Prostate gland (tissue), 2 donors: ENCODE measurements at regions of chr3 and their contacts with region 1.

Region 1: GRCh38 chr3:197002701-197003454 is 26.7 kb downstream of the MELTF start:
- DNase-seq: peak; percentile 84
- H3K4me3 ChIP-seq: peak overlapping the region; percentile 57 to 58
- H3K27ac ChIP-seq: peak overlapping the region; percentile 85 to 93
- H3K4me1 ChIP-seq: peaks cover 4% of the 10 kb centered on the region
- H3K27me3 ChIP-seq: no peaks in the 10 kb centered on the region
- CTCF ChIP-seq: peak; percentile 65 to 88 (median 74)
- POLR2A ChIP-seq: no peak

Region 2: DNA sequence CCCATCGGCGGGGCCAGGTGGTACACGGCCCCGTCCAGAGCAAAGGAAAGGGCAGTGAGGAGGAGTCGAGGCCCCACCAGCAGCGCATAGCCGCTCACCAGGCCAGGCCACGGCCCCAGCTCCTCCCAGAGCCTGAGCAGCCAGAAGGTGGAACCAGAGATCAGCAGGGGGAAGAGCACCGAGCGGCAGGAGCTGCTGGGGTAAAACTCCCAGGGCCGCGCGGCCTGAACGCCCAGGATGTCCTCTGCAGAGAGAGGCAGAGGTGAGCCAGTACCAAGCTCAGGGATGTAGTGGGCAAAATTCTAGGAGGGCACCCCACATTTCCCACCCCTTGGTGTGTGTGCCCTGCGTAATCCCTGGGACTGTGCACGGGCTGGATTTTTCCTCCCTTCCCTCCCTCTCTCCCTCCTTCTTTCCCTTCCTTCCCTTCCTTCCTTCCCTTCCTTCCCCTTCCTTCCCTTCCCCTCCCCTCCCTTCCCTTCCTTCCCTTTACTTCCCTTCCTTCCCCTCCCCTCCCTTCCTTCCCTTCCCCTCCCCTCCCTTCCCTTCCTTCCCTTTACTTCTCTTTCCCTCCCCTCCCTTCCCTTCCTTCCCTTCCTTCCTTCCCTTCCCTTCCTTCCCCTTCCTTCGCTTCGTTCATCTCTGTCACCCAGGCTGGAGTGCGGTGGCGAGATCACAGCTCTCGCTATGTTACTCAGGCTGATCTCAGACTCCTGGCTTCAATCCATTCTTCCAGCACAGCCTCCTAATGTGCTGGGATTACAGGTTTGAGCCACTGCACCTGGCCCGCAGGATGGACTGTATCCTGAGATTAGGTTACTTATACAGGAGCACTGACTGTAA is 54.2 kb before region 1 on chr3:
- intact Hi-C with region 1: no loop called
- DNase-seq: no peak
- H3K4me3 ChIP-seq: no peak overlapping the region
- H3K27ac ChIP-seq: no peak overlapping the region
- H3K4me1 ChIP-seq: peaks cover under 1% of the 10 kb centered on the region
- H3K27me3 ChIP-seq: no peaks in the 10 kb centered on the region
- CTCF ChIP-seq: no peak
- POLR2A ChIP-seq: no peak

Region 3: DNA sequence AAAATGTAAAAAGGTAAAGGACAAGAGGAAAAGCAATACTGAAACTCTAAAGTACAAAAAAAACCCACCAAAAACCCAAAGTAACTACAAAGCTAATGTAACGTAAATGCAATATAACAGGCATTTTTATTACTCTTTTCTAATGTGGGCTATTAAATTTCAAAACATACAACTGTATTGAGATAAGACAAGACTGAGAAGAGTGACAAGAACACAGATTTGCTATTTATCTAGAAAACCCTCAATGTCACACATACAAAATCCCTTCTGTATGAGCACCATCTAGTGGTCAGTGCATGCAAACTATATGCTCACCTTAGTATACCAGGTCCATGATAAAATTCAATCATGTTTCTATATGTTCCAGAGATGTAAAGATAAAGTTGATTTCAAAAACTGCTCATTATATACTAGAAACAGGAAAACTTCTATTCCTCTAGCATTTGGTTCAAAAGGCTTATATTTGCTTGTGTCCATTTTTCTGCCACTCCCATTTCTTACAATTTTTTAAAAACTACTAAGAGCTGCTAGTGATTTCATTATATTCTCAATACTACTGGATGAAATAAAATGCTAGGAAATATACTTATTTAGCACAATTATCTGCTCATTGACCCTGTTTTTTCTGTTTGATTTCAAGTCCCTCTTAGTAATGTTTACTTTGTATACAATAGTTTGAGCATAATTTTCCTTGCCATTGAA is 184.2 kb after region 1 on chr3:
- intact Hi-C with region 1: loop called (anchors 1 kb)
- DNase-seq: peak; percentile 32
- H3K4me3 ChIP-seq: no peak overlapping the region
- H3K27ac ChIP-seq: no peak overlapping the region
- H3K4me1 ChIP-seq: no peaks in the 10 kb centered on the region
- H3K27me3 ChIP-seq: no peaks in the 10 kb centered on the region
- CTCF ChIP-seq: peak; percentile 45 to 87 (median 75)
- POLR2A ChIP-seq: no peak